ENCODE measurements at regions of chr5 and their contacts with region 1.

Region 1: GRCh38 chr5:151825445-151825844 is 53.7 kb downstream of the G3BP1 start:
- DNase-seq: peak; percentile 64
- ATAC-seq: peak; percentile 61
- H3K4me3 ChIP-seq: no peak overlapping the region
- H3K27ac ChIP-seq: no peak overlapping the region
- H3K4me1 ChIP-seq: peaks cover 16% of the 10 kb centered on the region
- H3K27me3 ChIP-seq: no peaks in the 10 kb centered on the region
- CTCF ChIP-seq: peak; percentile 87
- EP300 ChIP-seq: no peak
- POLR2A ChIP-seq: no peak
- RAD21 ChIP-seq: peak; percentile 80

Region 2: DNA sequence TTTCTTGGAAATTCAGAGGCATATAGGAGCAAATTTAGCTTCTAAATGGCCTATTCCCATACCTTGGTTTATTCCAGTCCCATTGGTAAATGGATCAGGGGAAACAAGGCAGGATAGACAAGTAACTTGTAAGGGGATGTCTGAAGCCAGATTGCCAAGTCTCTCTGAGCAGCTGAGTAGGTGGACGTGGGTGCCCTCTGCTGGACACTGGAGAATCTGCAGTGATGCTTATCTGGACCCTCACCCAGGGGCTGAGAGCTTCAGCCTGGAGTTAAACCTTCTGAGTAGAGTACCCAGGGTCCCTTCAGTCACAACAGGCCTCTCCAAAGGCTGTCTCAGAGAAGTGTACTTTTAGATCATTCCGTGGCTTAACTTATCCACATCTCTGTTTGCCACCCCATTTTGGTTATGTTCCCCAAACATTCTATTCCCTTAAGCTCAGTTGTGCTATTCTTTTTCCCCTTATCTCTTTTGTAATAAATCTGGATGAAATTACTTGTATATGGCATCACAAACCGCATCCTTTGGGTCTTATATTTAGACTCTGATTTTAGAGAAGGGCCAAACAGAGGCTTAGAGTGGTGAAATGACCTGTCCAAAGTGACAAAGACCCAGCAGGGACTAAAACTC is 317.5 kb after region 1 on chr5:
- CTCF ChIA-PET with region 1: interaction called, 36 read pairs
- POLR2A ChIA-PET with region 1: no interaction called
- in situ Hi-C with region 1: loop called (anchors 5 kb)
- intact Hi-C with region 1: loop called (anchors 1 kb)
- DNase-seq: peak; percentile 43
- ATAC-seq: peak; percentile 94
- H3K4me3 ChIP-seq: no peak overlapping the region
- H3K27ac ChIP-seq: no peak overlapping the region
- H3K4me1 ChIP-seq: no peaks in the 10 kb centered on the region
- H3K27me3 ChIP-seq: peaks cover 0 to 6% of the 10 kb centered on the region in 2 experiments; a peak in 1 of 5 replicates
- CTCF ChIP-seq: peak; percentile 84
- EP300 ChIP-seq: no peak
- POLR2A ChIP-seq: no peak
- RAD21 ChIP-seq: peak; percentile 58; the same call in 1 of the 2 replicates

Region 3: DNA sequence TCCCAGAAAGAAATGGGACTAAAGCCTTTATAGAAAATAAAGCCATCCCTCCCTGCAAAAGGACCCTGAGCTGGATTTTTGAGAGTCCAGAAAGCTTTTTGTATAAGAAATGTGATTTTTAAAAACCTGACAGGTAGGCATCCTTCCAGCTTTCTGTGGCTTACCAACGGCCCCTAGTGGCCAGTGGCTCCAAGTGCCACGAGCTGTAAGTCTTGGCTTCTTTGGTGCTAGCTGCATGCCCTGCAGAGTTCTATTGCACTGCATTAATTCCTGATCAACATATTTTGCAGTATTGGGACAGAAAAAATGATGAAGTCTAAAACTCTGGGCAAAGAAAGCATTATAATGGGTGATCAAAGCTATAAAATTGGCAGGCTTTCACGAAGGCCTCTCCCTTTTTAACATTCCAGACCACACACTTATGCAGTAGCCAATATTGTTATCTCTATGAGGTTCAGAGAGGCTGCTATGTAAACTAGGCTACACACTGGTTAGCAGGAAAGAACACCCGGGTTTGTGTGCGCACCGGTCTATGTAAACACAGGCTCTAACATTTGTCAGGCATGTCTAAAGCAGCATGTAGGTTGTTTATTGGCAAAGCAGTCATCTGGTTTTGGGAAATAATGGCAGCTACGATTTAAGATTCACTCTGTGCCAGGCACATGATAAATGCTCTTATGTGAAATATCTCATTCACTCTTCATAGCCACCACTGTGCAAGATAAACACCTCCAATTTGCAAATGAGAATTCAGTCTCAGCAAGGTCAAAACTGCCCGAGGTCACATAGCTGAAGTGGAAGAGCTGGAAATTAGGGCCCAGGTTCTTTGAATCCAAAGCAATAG is 524.5 kb after region 1 on chr5:
- CTCF ChIA-PET with region 1: interaction called, 3 read pairs
- POLR2A ChIA-PET with region 1: no interaction called
- in situ Hi-C with region 1: no loop called
- intact Hi-C with region 1: loop called (anchors 1 kb)
- DNase-seq: peak; percentile 21
- ATAC-seq: peak; percentile 94
- H3K4me3 ChIP-seq: no peak overlapping the region
- H3K27ac ChIP-seq: no peak overlapping the region
- H3K4me1 ChIP-seq: peaks cover 7% of the 10 kb centered on the region; the same call in 1 of the 2 replicates
- H3K27me3 ChIP-seq: no peaks in the 10 kb centered on the region
- CTCF ChIP-seq: peak; percentile 66
- EP300 ChIP-seq: no peak
- POLR2A ChIP-seq: no peak
- RAD21 ChIP-seq: no peak

Region 4: GRCh38 chr5:152462021-152462721 is 636.7 kb after region 1 on chr5:
- CTCF ChIA-PET with region 1: no interaction called
- POLR2A ChIA-PET with region 1: no interaction called
- in situ Hi-C with region 1: no loop called
- intact Hi-C with region 1: loop called (anchors 5 kb)
- DNase-seq: no peak
- ATAC-seq: peak; percentile 69
- H3K4me3 ChIP-seq: no peak overlapping the region
- H3K27ac ChIP-seq: no peak overlapping the region
- H3K4me1 ChIP-seq: no peaks in the 10 kb centered on the region
- H3K27me3 ChIP-seq: no peaks in the 10 kb centered on the region
- CTCF ChIP-seq: peak; percentile 44
- EP300 ChIP-seq: no peak
- POLR2A ChIP-seq: no peak
- RAD21 ChIP-seq: no peak

Region 5: GRCh38 chr5:152505442-152506042 is 680.1 kb after region 1 on chr5:
- CTCF ChIA-PET with region 1: interaction called, 3 read pairs
- POLR2A ChIA-PET with region 1: no interaction called
- in situ Hi-C with region 1: loop called (anchors 25 kb)
- intact Hi-C with region 1: no loop called
- DNase-seq: peak; percentile 41
- ATAC-seq: peak; percentile 90
- H3K4me3 ChIP-seq: no peak overlapping the region
- H3K27ac ChIP-seq: no peak overlapping the region
- H3K4me1 ChIP-seq: no peaks in the 10 kb centered on the region
- H3K27me3 ChIP-seq: no peaks in the 10 kb centered on the region; a peak in 1 of 5 replicates
- CTCF ChIP-seq: peak; percentile 69
- EP300 ChIP-seq: no peak
- POLR2A ChIP-seq: no peak
- RAD21 ChIP-seq: 0 out of 2 replicates have a peak, but pooled peaks have one; percentile 12